Aorta (tissue), 5 donors: ENCODE measurements at regions of chr6 and their contacts with region 1.

Region 1: DNA sequence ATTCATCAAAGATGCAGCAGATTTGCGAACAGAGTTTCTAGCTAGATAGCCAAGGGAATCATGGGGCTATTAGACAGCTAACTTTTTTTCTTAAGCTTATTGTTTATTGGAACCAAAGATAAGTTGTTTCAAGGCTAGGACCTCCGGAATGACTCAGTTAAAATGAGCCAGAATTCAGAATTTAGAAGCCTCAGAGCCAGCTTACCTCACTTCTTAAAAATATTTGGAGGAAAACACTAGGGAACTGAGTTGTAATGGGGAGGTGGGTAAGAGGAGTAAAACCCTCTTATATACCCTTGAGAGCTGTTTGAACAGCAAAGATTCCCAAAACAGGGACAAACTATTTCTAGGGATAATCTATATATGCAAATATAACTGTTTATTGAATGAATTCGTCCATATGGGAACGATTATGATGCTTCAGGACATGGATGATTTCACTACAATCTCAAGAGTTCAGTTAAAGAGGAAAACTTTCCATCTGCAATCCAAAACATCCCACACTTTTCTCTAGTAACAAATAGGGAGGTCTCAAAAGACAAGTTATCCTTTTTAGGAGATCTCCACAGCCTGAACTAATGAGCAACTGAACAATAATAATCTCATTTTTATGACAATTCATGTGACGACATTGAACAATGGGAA is 12.6 kb upstream of the CARMIL1 start:
- DNase-seq: no peak
- ATAC-seq: peak; percentile 36
- H3K4me3 ChIP-seq: no peak overlapping the region
- H3K27ac ChIP-seq: no peak overlapping the region
- H3K4me1 ChIP-seq: no peaks in the 10 kb centered on the region
- H3K27me3 ChIP-seq: no peaks in the 10 kb centered on the region

Region 2: GRCh38 chr6:25490018-25490801 is 223.6 kb after region 1 on chr6:
- intact Hi-C with region 1: loop called in 1 of 2 experiments (anchors 2 kb)
- DNase-seq: peak; percentile 82 to 83
- ATAC-seq: peak; percentile 87
- H3K4me3 ChIP-seq: no peak overlapping the region
- H3K27ac ChIP-seq: no peak overlapping the region
- H3K4me1 ChIP-seq: peaks cover 0 to 2% of the 10 kb centered on the region in 2 donors
- H3K27me3 ChIP-seq: no peaks in the 10 kb centered on the region